PC-9 (cell line): ENCODE measurements at regions of chr7 and their contacts with region 1.

Region 1: GRCh38 chr7:74104703-74105102 is 21.1 kb downstream of the LIMK1 start:
- DNase-seq: peak; percentile 87 to 92
- H3K4me3 ChIP-seq: no peak overlapping the region
- H3K27ac ChIP-seq: peak overlapping the region; percentile 73
- H3K4me1 ChIP-seq: peaks cover 27% of the 10 kb centered on the region
- H3K27me3 ChIP-seq: no peaks in the 10 kb centered on the region
- CTCF ChIP-seq: no peak

Region 2: DNA sequence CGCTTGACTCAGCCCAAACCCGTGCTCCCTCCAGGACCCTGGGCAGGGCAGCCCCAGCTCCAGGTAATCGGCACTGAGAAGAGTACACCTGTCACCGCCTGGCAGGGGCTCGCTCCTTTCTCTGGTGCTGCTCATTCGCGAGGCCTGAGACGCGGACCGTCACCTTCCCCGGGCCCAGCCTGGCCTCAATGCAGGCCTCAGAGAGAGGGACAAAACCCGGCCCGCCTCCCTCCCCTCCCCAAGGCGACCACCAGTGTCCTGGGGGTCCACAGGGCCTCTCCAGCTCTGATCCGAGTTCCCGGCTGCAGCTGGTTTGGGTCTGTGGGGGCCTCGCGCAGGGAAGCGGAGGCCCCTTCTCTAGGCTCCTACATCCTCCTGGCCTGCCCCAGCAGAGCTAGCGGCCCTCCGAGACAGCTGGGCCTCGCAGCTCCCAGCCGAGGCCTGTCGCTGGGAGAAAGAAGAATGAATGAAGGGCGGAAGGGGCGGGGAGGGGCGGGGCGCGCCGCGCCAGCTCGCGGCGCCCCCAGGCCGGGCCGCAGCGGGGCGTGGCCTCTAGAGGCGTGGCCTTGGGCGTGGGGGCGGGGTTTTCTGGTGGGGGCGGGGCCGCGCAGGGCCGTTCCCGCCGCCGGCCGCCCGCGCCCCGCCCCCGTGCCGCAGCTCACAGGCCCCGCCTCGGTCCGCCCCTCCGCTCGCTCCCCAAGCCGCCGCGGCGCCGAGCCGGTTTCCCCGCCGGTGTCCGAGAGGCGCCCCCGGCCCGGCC is 21.4 kb before region 1 on chr7 and contains the start of gene LIMK1:
- CTCF ChIA-PET with region 1: no interaction called
- POLR2A ChIA-PET with region 1: interaction called, 14 read pairs
- intact Hi-C with region 1: no loop called
- DNase-seq: peak in 1 of 2 experiments; percentile 89
- H3K4me3 ChIP-seq: peak within 1 kb of the TSS; percentile 97
- H3K27ac ChIP-seq: peak within 1 kb of the TSS; percentile 62
- H3K4me1 ChIP-seq: peaks cover 32% of the 10 kb centered on the region
- H3K27me3 ChIP-seq: no peaks in the 10 kb centered on the region
- CTCF ChIP-seq: no peak
- total RNA-seq, gene LIMK1: 128 and 148 TPM in 2 replicates

Region 3: GRCh38 chr7:74133671-74134048 is 29.0 kb after region 1 on chr7:
- CTCF ChIA-PET with region 1: no interaction called
- POLR2A ChIA-PET with region 1: no interaction called
- intact Hi-C with region 1: loop called (anchors 1 kb)
- DNase-seq: peak; percentile 92 to 97
- H3K4me3 ChIP-seq: peak overlapping the region; percentile 21; the same call in 1 of the 2 replicates
- H3K27ac ChIP-seq: peak overlapping the region; percentile 94
- H3K4me1 ChIP-seq: peaks cover 28% of the 10 kb centered on the region
- H3K27me3 ChIP-seq: no peaks in the 10 kb centered on the region
- CTCF ChIP-seq: no peak

Region 4: GRCh38 chr7:74690474-74690873 is 585.8 kb after region 1 on chr7:
- CTCF ChIA-PET with region 1: no interaction called
- POLR2A ChIA-PET with region 1: no interaction called
- intact Hi-C with region 1: no loop called
- DNase-seq: no peak
- H3K4me3 ChIP-seq: no peak overlapping the region
- H3K27ac ChIP-seq: no peak overlapping the region
- H3K4me1 ChIP-seq: peaks cover 7% of the 10 kb centered on the region; the same call in 1 of the 2 replicates
- H3K27me3 ChIP-seq: no peaks in the 10 kb centered on the region
- CTCF ChIP-seq: no peak